Activated naive CD4-positive, alpha-beta T cell treated with anti-CD3 and anti-CD28 coated beads for 36 hours (primary cell): ENCODE measurements at regions of chr4 and their contacts with region 1.

Region 1: DNA sequence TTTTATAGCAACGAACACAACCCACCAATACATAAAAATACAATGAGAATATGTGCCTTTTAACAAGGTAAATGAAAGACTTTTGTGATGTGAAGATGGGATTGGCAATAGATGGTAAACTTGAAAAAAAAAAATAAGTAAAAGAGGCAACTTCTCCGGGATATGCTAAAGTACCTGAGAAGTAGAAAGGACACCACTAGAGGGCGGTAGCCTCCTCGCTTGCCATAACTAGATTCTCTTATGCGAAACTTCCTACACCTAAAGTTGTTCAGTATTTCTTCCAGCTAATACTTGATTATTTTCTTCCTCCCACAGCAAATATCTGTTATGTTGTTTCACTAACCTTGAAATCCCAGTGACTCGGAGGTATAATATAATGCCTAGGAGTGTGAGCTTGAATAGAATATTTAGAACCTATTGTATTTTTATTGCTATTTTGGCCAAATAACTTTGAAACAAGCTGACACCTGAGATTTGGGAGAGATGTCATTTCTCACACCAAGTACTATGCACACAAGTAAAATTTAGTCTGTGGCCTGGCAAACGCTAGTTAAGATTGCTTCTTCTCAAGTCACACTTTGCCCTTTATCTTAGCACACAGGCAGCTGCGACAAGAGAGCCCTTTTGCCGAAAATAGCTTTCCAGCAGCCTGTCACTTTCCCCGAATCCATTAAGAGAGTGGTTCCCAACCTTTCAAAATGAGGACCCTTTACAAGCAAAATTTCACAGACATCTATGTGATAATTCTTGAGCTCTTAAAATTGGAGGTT is 44.9 kb upstream of the PDLIM5 start:
- DNase-seq: peak; percentile 76
- H3K4me3 Mint-ChIP-seq: no peak overlapping the region
- H3K27ac Mint-ChIP-seq: no peak overlapping the region
- H3K4me1 Mint-ChIP-seq: no peaks in the 10 kb centered on the region
- H3K27me3 Mint-ChIP-seq: no peaks in the 10 kb centered on the region

Region 2: GRCh38 chr4:94304365-94304971 is 102.4 kb before region 1 on chr4:
- CTCF ChIA-PET with region 1: interaction called, 11 read pairs
- intact Hi-C with region 1: loop called (anchors 5 kb)
- DNase-seq: peak; percentile 40
- H3K4me3 Mint-ChIP-seq: no peak overlapping the region
- H3K27ac Mint-ChIP-seq: no peak overlapping the region
- H3K4me1 Mint-ChIP-seq: no peaks in the 10 kb centered on the region
- H3K27me3 Mint-ChIP-seq: no peaks in the 10 kb centered on the region

Region 3: DNA sequence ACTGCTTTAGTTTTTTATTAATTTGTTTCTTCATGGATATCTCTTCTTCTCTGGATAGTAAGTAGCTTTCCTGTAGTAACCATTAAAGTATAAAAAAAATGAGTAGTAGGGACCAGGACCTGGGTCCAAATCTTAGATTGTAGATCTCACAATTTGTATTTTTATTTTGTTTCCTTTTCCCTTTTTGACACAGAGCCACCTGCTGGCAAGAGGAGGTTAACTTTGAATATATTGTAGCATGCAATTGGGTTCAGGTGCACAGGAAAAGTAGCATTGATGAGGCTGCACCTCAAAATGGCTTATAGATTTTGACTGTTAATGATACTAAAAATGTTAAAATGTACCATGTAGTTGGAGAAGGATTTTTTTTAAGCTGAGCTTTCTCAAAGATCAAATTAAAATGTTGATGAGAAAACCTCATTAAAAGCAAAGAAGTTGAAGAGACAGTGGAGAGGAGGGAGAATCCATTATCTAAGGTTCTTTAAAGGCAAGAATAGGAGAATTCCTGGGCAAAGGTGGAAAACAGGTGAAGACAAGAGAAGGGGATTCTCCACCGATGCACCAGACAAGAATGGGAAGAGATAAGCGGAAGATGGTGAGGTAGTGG is 15.9 kb before region 1 on chr4:
- CTCF ChIA-PET with region 1: interaction called, 11 read pairs
- intact Hi-C with region 1: no loop called
- DNase-seq: peak; percentile 47
- H3K4me3 Mint-ChIP-seq: no peak overlapping the region
- H3K27ac Mint-ChIP-seq: no peak overlapping the region
- H3K4me1 Mint-ChIP-seq: no peaks in the 10 kb centered on the region
- H3K27me3 Mint-ChIP-seq: peaks cover 7% of the 10 kb centered on the region

Region 4: DNA sequence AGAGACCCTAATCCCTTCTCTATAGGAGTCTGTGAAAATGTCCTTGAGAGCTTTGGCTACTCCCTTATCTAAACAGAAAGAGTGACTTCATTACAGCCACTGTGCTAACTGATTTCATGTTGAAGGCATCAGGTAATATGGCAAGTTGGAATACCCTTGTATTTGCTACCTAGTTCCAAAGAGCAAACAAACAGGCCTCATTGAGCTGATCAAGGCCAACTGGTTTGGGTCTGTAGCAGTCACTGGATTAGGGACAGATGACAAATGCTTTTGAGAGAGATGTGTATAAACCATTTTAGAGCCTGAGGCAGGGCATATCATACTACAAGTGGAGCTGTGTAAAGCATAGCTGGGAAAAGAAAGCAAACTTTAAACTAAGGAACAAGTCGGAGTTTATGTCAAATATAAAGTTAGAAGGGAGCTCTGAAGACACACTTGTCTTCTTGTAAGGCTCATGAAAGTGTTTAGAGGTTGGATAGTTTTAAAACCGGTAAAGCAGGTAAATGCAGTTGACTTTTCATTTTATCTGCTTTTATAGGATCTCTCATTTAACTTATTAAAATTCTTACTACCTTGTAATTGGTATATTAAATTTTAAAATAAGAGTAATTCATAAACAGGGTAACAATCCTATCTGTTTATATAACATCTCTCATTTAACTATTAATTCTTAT is 22.2 kb after region 1 on chr4:
- CTCF ChIA-PET with region 1: interaction called, 10 read pairs
- intact Hi-C with region 1: no loop called
- DNase-seq: no peak
- H3K4me3 Mint-ChIP-seq: no peak overlapping the region
- H3K27ac Mint-ChIP-seq: no peak overlapping the region
- H3K4me1 Mint-ChIP-seq: no peaks in the 10 kb centered on the region
- H3K27me3 Mint-ChIP-seq: peaks cover under 1% of the 10 kb centered on the region

Region 5: DNA sequence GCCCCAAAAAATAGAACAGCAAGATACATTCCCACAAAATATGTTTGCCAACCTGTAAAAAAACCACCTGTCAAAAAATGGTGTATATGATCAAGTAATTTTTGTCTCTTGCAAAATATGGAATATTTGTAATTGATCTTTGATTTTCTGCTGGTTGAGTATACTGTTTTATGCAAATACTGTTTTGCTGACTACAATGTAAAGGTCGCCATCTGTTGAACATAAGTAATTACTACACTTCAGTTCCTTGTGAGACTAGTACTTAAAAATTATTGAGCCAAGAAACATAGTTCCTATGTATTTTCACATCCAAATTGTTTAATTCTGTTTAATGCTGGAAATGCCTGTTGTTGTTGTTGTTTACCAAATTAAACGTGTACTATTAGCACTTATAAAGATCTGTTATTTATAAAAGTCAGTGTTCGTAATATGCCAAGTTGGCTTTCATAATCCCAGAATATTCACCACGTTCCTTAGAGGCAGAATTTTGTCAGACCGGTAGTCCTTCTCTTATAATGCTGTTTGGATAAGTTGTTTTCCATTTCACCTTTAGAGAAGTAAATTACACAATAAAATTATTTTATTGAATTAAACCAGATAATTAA is 189.1 kb after region 1 on chr4:
- CTCF ChIA-PET with region 1: interaction called, 19 read pairs
- intact Hi-C with region 1: loop called (anchors 1 kb)
- DNase-seq: no peak
- H3K4me3 Mint-ChIP-seq: no peak overlapping the region
- H3K27ac Mint-ChIP-seq: no peak overlapping the region
- H3K4me1 Mint-ChIP-seq: no peaks in the 10 kb centered on the region
- H3K27me3 Mint-ChIP-seq: no peaks in the 10 kb centered on the region